A673 (cell line): ENCODE measurements at regions of chr4 and their contacts with region 1.

Region 1: GRCh38 chr4:187606581-187606980 is 389.0 kb upstream of the ZFP42 start:
- DNase-seq: peak; percentile 84
- H3K4me3 ChIP-seq: no peak overlapping the region
- H3K27ac ChIP-seq: no peak overlapping the region
- H3K4me1 ChIP-seq: peaks cover 32% of the 10 kb centered on the region
- H3K27me3 ChIP-seq: no peaks in the 10 kb centered on the region
- CTCF ChIP-seq: peak; percentile 95

Region 2: DNA sequence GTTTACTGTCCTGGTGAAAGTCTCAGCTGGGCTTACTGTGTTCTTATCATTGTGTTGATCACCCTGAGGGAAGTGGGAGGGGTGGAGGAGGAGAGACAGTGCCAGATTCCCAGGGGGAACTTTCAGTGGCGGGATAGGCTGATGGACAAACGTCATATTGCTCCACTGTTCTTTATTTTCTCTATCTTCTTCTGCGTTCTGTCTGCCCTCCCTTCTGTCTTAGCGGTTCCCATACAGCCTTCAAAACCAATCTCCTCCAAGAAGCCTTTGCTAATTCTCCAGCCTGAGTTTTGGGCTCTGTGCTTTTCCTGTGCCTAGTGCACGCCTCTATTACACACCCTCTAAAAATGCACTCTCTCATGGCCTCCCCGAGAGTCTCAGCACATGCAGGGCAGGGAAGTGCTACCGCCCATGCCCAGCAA is 434.2 kb before region 1 on chr4:
- CTCF ChIA-PET with region 1: no interaction called
- POLR2A ChIA-PET with region 1: no interaction called
- intact Hi-C with region 1: no loop called
- DNase-seq: no peak
- H3K4me3 ChIP-seq: no peak overlapping the region
- H3K27ac ChIP-seq: no peak overlapping the region
- H3K4me1 ChIP-seq: no peaks in the 10 kb centered on the region
- H3K27me3 ChIP-seq: peaks cover 54% of the 10 kb centered on the region
- CTCF ChIP-seq: no peak

Region 3: DNA sequence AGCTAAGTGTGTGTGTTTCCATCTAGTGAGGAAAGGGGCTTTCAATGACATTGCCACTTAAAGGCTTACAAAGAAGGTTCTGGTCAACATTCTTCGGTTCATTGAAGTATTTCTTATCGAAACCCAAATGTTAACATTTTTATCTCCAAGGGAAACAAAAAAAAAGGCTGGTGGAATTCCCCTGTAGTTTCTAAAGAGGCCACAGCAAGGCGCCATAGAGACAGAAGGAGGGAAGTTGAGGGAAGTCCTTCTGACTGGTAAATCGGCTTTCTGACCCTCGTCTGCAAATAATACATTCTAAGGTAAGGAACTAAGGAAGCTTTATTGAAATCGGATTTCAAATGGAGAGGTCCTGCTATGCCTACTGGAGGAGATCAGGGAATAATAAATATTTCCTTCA is 387.2 kb after region 1 on chr4:
- CTCF ChIA-PET with region 1: no interaction called
- POLR2A ChIA-PET with region 1: no interaction called
- intact Hi-C with region 1: loop called (anchors 2 kb)
- DNase-seq: peak; percentile 56
- H3K4me3 ChIP-seq: no peak overlapping the region
- H3K27ac ChIP-seq: no peak overlapping the region
- H3K4me1 ChIP-seq: no peaks in the 10 kb centered on the region
- H3K27me3 ChIP-seq: no peaks in the 10 kb centered on the region
- CTCF ChIP-seq: peak; percentile 62

Region 4: DNA sequence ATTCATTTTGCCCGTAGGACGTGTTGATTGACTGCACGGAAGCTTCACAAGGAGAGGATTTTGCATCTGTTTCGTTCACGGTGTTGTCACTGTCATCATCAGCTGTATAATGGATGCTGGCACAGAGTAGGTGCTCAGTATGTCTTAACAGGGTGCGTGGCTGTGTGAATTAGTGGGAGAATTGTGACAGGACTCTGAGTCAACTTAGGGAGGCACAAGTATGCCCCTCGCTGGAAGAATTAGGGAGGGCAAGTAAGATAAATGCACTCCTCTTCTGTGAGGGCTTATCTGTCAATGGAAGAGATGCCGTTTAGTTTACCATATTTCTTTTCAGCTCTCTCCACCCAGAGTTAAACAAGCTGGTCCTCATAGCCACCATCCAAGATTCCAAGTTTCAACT is 639.9 kb after region 1 on chr4:
- CTCF ChIA-PET with region 1: no interaction called
- POLR2A ChIA-PET with region 1: no interaction called
- intact Hi-C with region 1: loop called (anchors 5 kb)
- DNase-seq: peak; percentile 62
- H3K4me3 ChIP-seq: no peak overlapping the region
- H3K27ac ChIP-seq: no peak overlapping the region
- H3K4me1 ChIP-seq: no peaks in the 10 kb centered on the region
- H3K27me3 ChIP-seq: peaks cover 11% of the 10 kb centered on the region
- CTCF ChIP-seq: peak; percentile 41

Region 5: DNA sequence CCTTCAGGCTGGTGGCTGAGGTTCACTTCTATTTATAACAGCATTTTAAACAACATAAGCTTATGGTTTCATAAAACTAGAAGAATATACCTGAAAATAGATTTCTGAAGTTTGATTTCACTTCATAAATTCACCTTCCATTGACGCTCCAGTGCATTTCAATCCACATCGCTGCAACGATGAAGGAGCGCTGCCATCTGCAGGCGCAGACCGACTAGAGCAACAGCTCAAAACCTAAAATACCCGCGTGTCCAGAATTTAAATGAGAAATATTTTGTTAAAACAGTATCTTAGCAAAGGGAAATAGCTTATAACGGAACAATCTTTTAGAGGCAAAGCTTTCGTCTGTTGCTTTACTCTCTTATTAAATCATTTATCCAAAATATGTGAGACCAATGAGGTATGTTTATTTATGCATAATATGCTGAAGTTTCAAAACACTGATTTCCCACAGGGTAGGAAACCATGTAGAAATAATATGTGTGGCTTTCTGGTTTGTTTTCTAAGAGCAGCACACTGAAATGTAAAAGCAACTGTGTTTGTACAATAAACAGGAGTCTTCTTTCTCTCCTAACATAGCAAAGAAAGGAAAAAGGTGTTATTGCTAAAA is 1517.7 kb after region 1 on chr4:
- CTCF ChIA-PET with region 1: no interaction called
- POLR2A ChIA-PET with region 1: no interaction called
- intact Hi-C with region 1: loop called (anchors 5 kb)
- DNase-seq: peak; percentile 42
- H3K4me3 ChIP-seq: no peak overlapping the region
- H3K27ac ChIP-seq: no peak overlapping the region
- H3K4me1 ChIP-seq: no peaks in the 10 kb centered on the region
- H3K27me3 ChIP-seq: peaks cover 23% of the 10 kb centered on the region
- CTCF ChIP-seq: peak; percentile 60

Region 6: DNA sequence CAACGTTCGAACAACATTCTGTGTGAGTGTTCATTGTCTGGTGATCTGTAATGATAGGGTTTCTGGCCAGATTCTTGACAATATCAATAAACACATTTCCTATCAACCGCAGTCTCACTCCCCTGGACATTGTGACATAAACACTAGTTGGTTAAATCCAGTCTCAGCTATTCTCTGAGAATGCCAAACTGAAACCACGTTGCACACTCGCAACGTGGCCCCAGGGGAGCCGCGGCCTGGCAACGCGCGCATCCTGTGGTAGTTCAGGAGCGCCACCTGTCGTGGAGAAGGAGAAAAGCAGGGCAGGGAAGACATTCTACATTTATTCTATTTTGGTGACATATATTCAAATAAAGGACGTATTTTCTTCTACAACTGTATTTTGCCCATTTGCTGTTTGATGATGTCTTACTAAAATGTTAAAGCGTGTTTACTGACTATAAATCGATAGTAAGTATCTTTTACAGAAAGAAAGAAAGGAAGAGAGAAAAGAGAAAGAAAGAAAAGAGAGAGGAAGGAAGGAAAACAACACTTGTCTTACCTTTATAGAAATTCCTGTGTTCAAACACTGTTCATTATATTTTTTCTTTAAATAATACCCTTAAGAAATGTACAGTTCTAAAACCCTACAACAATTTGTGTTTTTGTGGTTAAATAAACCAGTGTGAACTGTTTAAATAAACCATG is 1595.7 kb after region 1 on chr4:
- CTCF ChIA-PET with region 1: no interaction called
- POLR2A ChIA-PET with region 1: no interaction called
- intact Hi-C with region 1: loop called (anchors 2 kb)
- DNase-seq: peak; percentile 77
- H3K4me3 ChIP-seq: peak overlapping the region; percentile 38
- H3K27ac ChIP-seq: no peak overlapping the region
- H3K4me1 ChIP-seq: no peaks in the 10 kb centered on the region
- H3K27me3 ChIP-seq: peaks cover 51% of the 10 kb centered on the region
- CTCF ChIP-seq: peak; percentile 97